WTC11 (cell line): ENCODE measurements at regions of chr7 and their contacts with region 1.

Region 1: GRCh38 chr7:121395961-121396757 is at the start of gene FAM3C:
- DNase-seq: peak; percentile 90
- ATAC-seq: peak; percentile 95
- H3K4me3 Mint-ChIP-seq: peak within 1 kb of the TSS; percentile 93
- H3K27ac Mint-ChIP-seq: peak within 1 kb of the TSS; percentile 87
- H3K4me1 Mint-ChIP-seq: peaks cover 20% of the 10 kb centered on the region
- H3K27me3 Mint-ChIP-seq: no peaks in the 10 kb centered on the region
- CTCF ChIP-seq: peak; percentile 89
- total RNA-seq, gene FAM3C: 51.2 to 65.7 TPM (median 54.4 TPM) in 3 replicates

Region 2: GRCh38 chr7:121273467-121274167 is 122.5 kb before region 1 on chr7:
- CTCF ChIA-PET with region 1: no interaction called
- POLR2A ChIA-PET with region 1: no interaction called
- DNase-seq: no peak
- ATAC-seq: no peak
- H3K4me3 Mint-ChIP-seq: no peak overlapping the region
- H3K27ac Mint-ChIP-seq: no peak overlapping the region
- H3K4me1 Mint-ChIP-seq: peaks cover 13% of the 10 kb centered on the region
- H3K27me3 Mint-ChIP-seq: no peaks in the 10 kb centered on the region
- CTCF ChIP-seq: no peak

Region 3: DNA sequence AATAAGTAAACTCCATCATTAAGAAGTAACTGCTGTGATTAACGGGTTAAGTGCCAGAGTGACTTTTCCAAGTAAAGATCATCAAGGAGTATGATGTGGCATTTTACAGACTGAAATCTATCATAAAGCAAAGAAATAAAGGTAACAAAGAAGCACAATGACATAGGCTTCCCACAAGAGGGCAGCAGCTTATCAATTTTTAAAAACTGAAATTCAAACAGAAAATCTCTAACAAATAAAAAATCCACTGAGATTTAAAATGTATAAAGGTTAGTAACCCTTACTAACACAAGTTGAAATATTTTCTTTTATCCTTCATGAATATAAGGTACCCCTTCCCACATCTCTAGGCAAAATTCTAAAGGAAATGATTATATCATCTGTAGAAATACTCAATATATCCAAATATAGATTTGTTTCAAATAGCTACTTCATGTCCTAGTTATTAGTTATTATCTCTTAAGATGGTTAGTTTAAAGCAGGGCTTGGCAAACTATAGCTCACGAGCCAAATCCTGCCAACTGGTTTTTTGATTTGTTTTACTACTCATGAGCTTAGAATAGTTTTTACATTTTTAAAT is 29.2 kb before region 1 on chr7:
- CTCF ChIA-PET with region 1: interaction called, 27 read pairs
- POLR2A ChIA-PET with region 1: no interaction called
- DNase-seq: no peak
- ATAC-seq: no peak
- H3K4me3 Mint-ChIP-seq: no peak overlapping the region
- H3K27ac Mint-ChIP-seq: no peak overlapping the region
- H3K4me1 Mint-ChIP-seq: peaks cover 14% of the 10 kb centered on the region
- H3K27me3 Mint-ChIP-seq: no peaks in the 10 kb centered on the region
- CTCF ChIP-seq: peak; percentile 51; the same call in 1 of the 2 replicates

Region 4: DNA sequence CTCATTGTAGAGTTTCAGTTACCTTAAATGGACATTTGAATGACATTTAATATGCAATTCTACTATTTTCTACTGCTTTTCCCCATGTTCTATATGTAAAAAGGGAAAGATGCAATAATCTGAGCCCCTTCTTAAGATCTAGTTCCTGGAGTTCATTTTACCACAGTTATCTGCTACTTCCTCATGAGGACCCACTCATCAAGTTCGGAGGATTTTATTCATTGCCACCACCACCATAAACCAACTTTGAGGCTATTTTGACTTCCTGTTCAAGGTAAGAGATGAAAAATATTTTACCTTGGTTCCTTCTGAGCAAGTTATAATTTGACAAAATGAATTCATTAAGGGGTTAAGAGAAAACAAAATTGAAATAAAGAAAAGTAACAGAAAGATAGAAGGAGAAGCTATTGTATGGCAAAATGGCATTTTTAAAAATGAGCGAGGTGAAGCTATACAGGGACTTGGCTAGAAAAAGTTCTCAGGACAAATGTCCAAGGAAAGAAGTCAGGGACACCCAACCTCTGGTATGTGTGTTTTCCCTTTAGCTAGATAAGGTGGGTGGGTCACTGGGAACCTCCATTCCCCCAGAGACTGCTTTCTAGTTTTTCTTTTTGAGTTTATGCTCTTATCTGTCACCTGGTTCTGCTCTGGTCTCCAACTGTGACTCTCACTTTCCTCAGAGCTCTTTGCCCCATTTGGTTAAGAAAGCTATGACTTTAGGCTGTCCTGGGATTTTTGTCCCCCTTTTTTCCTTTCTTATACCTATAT is 14.9 kb after region 1 on chr7:
- CTCF ChIA-PET with region 1: interaction called, 14 read pairs
- POLR2A ChIA-PET with region 1: no interaction called
- DNase-seq: no peak
- ATAC-seq: no peak
- H3K4me3 Mint-ChIP-seq: no peak overlapping the region
- H3K27ac Mint-ChIP-seq: no peak overlapping the region
- H3K4me1 Mint-ChIP-seq: peaks cover 15% of the 10 kb centered on the region
- H3K27me3 Mint-ChIP-seq: no peaks in the 10 kb centered on the region
- CTCF ChIP-seq: no peak

Region 5: GRCh38 chr7:121480058-121480457 is 83.9 kb after region 1 on chr7:
- CTCF ChIA-PET with region 1: interaction called, 12 read pairs
- POLR2A ChIA-PET with region 1: interaction called, 3 read pairs
- DNase-seq: no peak
- ATAC-seq: peak; percentile 68
- H3K4me3 Mint-ChIP-seq: peak overlapping the region; percentile 20; the same call in 1 of the 2 replicates
- H3K27ac Mint-ChIP-seq: peak overlapping the region; percentile 91
- H3K4me1 Mint-ChIP-seq: peaks cover 29% of the 10 kb centered on the region
- H3K27me3 Mint-ChIP-seq: no peaks in the 10 kb centered on the region
- CTCF ChIP-seq: no peak